ENCODE measurements at regions of chr9 and their contacts with region 1.

Region 1: DNA sequence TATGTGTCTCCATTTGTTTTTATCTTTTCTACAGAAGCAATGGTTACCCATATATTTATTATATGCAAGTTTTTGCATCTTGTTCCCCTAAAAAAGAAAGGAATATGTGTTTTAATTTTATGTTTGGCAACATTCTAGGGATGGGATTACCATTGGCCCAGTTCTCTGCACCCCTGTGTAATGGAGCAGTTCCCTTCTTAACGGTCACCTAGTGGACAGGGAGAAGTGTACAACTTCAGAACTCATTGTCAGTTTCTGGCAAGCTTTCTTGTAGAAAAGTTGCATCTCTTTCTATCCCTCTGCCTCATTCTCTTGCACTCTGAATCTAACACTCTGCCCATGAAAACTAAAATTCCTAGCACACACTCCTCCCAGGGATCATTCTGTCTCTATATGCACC is 78.2 kb downstream of the DOCK8 start:
- DNase-seq: no peak
- H3K4me3 ChIP-seq: no peak overlapping the region
- H3K27ac ChIP-seq: no peak overlapping the region
- H3K4me1 ChIP-seq: peaks cover 12 to 23% (median 15%) of the 10 kb centered on the region in 4 experiments
- H3K27me3 ChIP-seq: no peaks in the 10 kb centered on the region

Region 2: GRCh38 chr9:306887-307286 is 14.0 kb after region 1 on chr9:
- CTCF ChIA-PET with region 1: interaction called, 13 read pairs
- POLR2A ChIA-PET with region 1: no interaction called
- DNase-seq: peak; percentile 54 to 71 (median 68)
- H3K4me3 ChIP-seq: no peak overlapping the region
- H3K27ac ChIP-seq: no peak overlapping the region
- H3K4me1 ChIP-seq: no peaks in the 10 kb centered on the region
- H3K27me3 ChIP-seq: no peaks in the 10 kb centered on the region

Measured in common myeloid progenitor, CD34-positive (primary cell).